ENCODE measurements at regions of chr1 and their contacts with region 1.

Region 1: GRCh38 chr1:100132566-100133477 is at the starts of genes SASS6 and TRMT13:
- DNase-seq: peak; percentile 97
- H3K4me3 ChIP-seq: peak within 1 kb of the TSS; percentile 61 to 99 (median 85)
- H3K27ac ChIP-seq: peak within 1 kb of the TSS; percentile 58
- H3K4me1 ChIP-seq: peaks cover 24% of the 10 kb centered on the region
- H3K27me3 ChIP-seq: no peaks in the 10 kb centered on the region
- CTCF ChIP-seq: no peak
- POLR2A ChIP-seq: peak; percentile 80
- total RNA-seq, gene SASS6: 6.5 and 7.3 TPM in 2 replicates
- total RNA-seq, gene TRMT13: 12.7 and 14.1 TPM in 2 replicates

Region 2: GRCh38 chr1:99969729-99970621 is 162.8 kb before region 1 on chr1 and contains the start of gene SLC35A3:
- CTCF ChIA-PET with region 1: no interaction called
- POLR2A ChIA-PET with region 1: no interaction called
- dilution Hi-C with region 1: no loop called
- intact Hi-C with region 1: loop called (anchors 5 kb)
- DNase-seq: peak; percentile 68
- H3K4me3 ChIP-seq: peak within 1 kb of the TSS; percentile 62 to 91 (median 69)
- H3K27ac ChIP-seq: peak within 1 kb of the TSS; percentile 25
- H3K4me1 ChIP-seq: peaks cover 11% of the 10 kb centered on the region
- H3K27me3 ChIP-seq: no peaks in the 10 kb centered on the region
- CTCF ChIP-seq: no peak
- POLR2A ChIP-seq: no peak
- total RNA-seq, gene SLC35A3: 19.0 and 20.2 TPM in 2 replicates

Region 3: GRCh38 chr1:100249537-100250257 is 116.9 kb after region 1 on chr1 and contains the start of gene DBT:
- CTCF ChIA-PET with region 1: no interaction called
- POLR2A ChIA-PET with region 1: no interaction called
- dilution Hi-C with region 1: no loop called
- intact Hi-C with region 1: loop called (anchors 1 kb)
- DNase-seq: peak; percentile 95
- H3K4me3 ChIP-seq: peak within 1 kb of the TSS; percentile 20 to 63 (median 63)
- H3K27ac ChIP-seq: peak within 1 kb of the TSS; percentile 26
- H3K4me1 ChIP-seq: peaks cover 10% of the 10 kb centered on the region
- H3K27me3 ChIP-seq: peaks cover 0 to 6% of the 10 kb centered on the region in 2 experiments
- CTCF ChIP-seq: no peak
- POLR2A ChIP-seq: peak; percentile 88
- total RNA-seq, gene DBT: 7.9 and 9.0 TPM in 2 replicates

Region 4: GRCh38 chr1:100292711-100293110 is 159.9 kb after region 1 on chr1:
- CTCF ChIA-PET with region 1: no interaction called
- POLR2A ChIA-PET with region 1: no interaction called
- dilution Hi-C with region 1: no loop called
- intact Hi-C with region 1: loop called (anchors 2 kb)
- DNase-seq: peak; percentile 96
- H3K4me3 ChIP-seq: no peak overlapping the region
- H3K27ac ChIP-seq: peak overlapping the region; percentile 97
- H3K4me1 ChIP-seq: peaks cover 43% of the 10 kb centered on the region
- H3K27me3 ChIP-seq: no peaks in the 10 kb centered on the region
- CTCF ChIP-seq: no peak
- POLR2A ChIP-seq: peak; percentile 82

Region 5: GRCh38 chr1:100308777-100309176 is 176.0 kb after region 1 on chr1:
- CTCF ChIA-PET with region 1: no interaction called
- POLR2A ChIA-PET with region 1: no interaction called
- dilution Hi-C with region 1: no loop called
- intact Hi-C with region 1: no loop called
- DNase-seq: peak; percentile 74
- H3K4me3 ChIP-seq: no peak overlapping the region
- H3K27ac ChIP-seq: no peak overlapping the region
- H3K4me1 ChIP-seq: peaks cover 9% of the 10 kb centered on the region
- H3K27me3 ChIP-seq: no peaks in the 10 kb centered on the region
- CTCF ChIP-seq: no peak
- POLR2A ChIP-seq: no peak

Region 6: DNA sequence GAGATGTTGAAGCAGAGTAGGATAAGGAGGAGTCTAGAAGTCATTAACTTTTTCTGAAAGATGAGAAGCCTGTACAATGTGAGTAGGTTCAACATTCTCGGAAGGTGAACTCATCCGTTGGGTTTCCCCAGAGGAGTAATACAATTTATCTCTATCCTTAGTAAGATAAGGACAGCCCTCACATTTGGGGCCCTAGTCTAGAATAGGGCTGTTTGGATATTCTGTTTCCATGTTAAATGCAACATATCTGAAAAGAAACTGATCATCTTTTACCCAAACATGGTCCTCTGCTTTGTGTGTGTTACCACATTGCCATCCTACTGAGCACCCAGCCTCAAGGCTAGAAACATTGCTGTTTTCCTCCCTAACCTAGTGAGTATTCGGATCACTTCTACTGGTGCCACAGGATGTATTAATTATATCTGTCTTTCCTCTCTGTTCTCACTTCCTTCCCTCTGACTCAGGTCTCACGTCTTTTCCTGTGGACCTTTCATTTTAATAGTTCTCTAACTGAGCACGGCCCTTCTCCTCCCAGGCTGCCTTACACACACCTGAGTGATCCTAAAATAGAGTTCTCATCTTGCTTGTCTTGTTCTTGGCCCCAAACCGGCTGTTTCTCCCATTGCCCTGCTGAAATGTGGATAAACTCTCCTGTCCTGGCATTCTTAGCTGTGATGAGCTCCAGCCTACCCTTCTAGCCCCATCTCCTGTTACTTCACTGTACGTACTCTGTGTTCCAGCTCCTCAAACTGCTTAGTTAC is 311.2 kb after region 1 on chr1:
- CTCF ChIA-PET with region 1: no interaction called
- POLR2A ChIA-PET with region 1: no interaction called
- dilution Hi-C with region 1: no loop called
- intact Hi-C with region 1: loop called (anchors 1 kb)
- DNase-seq: peak; percentile 74
- H3K4me3 ChIP-seq: peak overlapping the region in 1 of 3 experiments; percentile 3
- H3K27ac ChIP-seq: peak overlapping the region; percentile 87
- H3K4me1 ChIP-seq: peaks cover 38% of the 10 kb centered on the region
- H3K27me3 ChIP-seq: no peaks in the 10 kb centered on the region
- CTCF ChIP-seq: no peak
- POLR2A ChIP-seq: no peak